Breast epithelium (tissue), 4 donors: ENCODE measurements at regions of chr7 and their contacts with region 1.

Region 1: GRCh38 chr7:82714883-82715282 is 271.3 kb upstream of the CACNA2D1 start:
- DNase-seq: no peak
- H3K4me3 ChIP-seq: no peak overlapping the region
- H3K27ac ChIP-seq: no peak overlapping the region
- H3K4me1 ChIP-seq: no peaks in the 10 kb centered on the region
- H3K27me3 ChIP-seq: no peaks in the 10 kb centered on the region
- CTCF ChIP-seq: no peak
- POLR2A ChIP-seq: no peak

Region 2: GRCh38 chr7:81627536-81628287 is 1087.2 kb before region 1 on chr7:
- intact Hi-C with region 1: loop called (anchors 5 kb)
- DNase-seq: no peak
- H3K4me3 ChIP-seq: no peak overlapping the region
- H3K27ac ChIP-seq: no peak overlapping the region
- H3K4me1 ChIP-seq: no peaks in the 10 kb centered on the region
- H3K27me3 ChIP-seq: no peaks in the 10 kb centered on the region
- CTCF ChIP-seq: no peak
- POLR2A ChIP-seq: no peak